ENCODE measurements at regions of chr12 and their contacts with region 1.

Region 1: DNA sequence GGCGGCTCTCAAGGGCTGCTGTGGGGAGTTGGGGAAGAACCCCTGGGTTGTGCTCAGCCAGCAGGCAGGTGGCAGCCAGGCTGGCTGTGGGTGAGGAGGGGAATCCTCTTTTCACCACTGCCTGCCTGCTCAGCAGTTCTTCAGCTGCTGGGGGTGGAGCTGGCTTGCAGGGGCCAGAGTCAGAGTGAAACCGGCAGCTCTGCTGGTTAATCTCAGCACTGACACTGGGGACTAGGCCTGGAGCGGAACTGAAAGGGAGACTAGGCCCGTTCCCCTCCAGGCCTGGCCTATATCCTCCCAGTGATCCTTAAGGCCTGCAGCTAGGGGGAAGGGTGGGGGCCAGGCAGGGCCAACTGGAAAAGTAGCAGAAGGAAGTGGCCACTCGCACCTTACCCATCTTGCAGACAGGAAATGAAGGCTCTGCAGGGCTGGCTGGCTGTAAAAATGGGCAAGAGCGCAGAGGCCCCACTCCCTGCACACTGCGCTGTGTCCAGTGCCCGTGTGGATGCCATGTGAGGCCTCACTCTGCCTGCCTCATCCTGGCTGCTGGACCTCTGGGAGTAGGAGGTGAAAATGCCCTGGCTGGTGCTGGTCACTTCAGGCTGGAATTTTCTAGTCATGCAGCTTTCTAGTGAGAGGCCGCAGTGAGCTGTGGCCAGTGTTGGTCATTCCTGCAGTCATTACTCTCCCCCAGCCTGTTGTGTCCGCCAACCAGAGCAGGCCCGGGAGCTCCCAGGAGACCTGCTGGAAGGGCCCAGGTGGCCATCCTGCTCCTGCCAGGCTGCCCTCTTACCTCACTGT is 39.4 kb downstream of the SH2B3 start:
- DNase-seq: peak; percentile 96
- ATAC-seq: peak; percentile 97
- H3K4me3 Mint-ChIP-seq: peak overlapping the region; percentile 26
- H3K27ac Mint-ChIP-seq: peak overlapping the region; percentile 83
- H3K4me1 Mint-ChIP-seq: peaks cover 78% of the 10 kb centered on the region
- H3K27me3 Mint-ChIP-seq: no peaks in the 10 kb centered on the region

Region 2: DNA sequence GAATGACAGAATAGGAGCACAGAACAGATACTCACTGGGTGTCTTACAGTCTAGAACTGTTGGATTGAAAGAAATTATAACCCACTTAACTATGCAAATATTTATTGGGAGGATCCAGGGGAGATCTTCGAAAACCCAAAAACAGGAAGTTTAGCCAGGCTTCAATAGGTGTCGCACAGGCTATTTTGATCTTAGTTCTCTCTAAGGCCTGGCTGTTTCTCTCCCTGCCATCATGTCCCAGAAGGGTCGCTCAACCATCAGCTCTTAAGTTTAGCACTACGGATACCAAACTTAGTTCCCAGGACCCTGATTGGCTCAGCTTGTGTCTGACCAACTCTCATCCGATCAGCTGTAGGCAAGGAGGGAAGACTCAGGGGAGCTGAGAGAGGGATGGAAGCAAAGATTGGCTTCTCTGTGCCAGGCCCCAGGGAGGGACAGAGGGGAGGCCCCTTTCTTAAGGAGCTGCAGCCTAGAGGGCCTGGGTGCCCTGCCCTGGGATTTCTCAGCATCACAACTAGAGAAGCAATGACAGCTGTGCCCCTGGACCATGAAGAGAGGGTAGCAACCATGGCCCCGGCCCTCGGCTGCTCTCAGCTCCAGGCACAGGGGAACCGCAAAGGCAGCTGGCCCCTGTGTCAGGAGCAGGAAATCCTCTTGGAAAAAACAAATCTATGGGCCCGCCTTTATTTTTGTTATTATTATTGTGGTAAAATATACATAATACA is 89.8 kb before region 1 on chr12:
- CTCF ChIA-PET with region 1: no interaction called
- DNase-seq: no peak
- ATAC-seq: no peak
- H3K4me3 Mint-ChIP-seq: no peak overlapping the region
- H3K27ac Mint-ChIP-seq: no peak overlapping the region
- H3K4me1 Mint-ChIP-seq: peaks cover 14% of the 10 kb centered on the region
- H3K27me3 Mint-ChIP-seq: peaks cover 8% of the 10 kb centered on the region

Region 3: DNA sequence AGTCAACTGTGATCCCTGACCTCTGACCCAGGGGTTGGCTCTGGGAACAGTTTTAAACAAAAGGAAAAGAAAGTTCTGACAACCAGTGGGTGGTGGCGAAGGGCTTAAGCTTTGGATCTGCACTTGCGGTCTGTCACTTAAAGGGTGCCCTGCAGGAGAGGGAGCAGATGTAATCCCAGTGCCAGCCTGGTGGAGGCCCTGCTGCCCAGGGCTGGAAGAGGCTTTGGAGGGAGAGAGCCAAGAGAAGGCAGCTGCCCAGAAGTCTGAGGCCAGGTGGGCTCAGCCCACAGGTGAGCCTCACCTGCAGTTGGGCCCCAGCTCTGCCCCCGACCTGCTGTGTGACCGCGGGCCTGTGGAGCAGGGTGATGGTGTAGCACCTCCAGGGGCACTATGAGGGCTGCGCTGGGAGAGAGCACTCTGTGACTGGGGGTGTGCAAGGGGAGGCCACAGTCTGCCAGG is 20.3 kb before region 1 on chr12:
- CTCF ChIA-PET with region 1: interaction called, 38 read pairs
- DNase-seq: no peak
- ATAC-seq: no peak
- H3K4me3 Mint-ChIP-seq: no peak overlapping the region
- H3K27ac Mint-ChIP-seq: peak overlapping the region; percentile 65
- H3K4me1 Mint-ChIP-seq: peaks cover 61% of the 10 kb centered on the region
- H3K27me3 Mint-ChIP-seq: no peaks in the 10 kb centered on the region

Region 4: DNA sequence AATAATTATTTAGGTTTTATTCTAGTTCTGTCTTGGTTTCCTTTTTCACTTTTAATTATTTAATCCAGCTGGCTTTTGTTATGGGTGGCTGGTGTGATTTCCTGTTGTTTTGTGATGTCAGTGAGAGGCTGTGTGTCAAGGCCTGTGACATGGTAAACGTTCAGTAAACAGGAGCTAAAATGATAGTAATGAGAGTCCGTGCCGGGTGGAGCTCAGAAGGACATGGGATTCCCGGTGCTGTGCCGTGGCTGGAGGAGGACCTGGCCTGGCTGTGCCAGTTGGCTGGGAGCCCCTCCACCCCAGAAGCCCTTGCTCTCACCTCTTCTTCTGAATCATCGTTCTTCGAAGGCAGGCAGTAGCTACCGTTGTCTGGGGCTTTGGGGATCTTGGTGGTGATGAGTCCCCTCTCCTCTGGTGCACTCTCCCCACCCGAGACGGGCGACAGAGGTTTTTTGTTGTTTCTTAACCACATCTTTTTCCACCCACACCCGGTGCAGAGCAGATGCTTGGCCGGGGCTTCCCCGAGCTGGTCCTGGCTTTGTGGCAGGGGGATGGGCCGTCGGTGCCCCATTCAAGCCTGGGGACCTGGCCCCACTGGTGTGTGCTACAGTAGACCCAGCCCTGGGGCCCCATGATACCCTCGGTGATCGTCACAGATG is 10.3 kb before region 1 on chr12:
- CTCF ChIA-PET with region 1: interaction called, 44 read pairs
- DNase-seq: peak; percentile 91
- ATAC-seq: peak; percentile 68
- H3K4me3 Mint-ChIP-seq: peak overlapping the region; percentile 63
- H3K27ac Mint-ChIP-seq: peak overlapping the region; percentile 95
- H3K4me1 Mint-ChIP-seq: peaks cover 89% of the 10 kb centered on the region
- H3K27me3 Mint-ChIP-seq: no peaks in the 10 kb centered on the region

Region 5: DNA sequence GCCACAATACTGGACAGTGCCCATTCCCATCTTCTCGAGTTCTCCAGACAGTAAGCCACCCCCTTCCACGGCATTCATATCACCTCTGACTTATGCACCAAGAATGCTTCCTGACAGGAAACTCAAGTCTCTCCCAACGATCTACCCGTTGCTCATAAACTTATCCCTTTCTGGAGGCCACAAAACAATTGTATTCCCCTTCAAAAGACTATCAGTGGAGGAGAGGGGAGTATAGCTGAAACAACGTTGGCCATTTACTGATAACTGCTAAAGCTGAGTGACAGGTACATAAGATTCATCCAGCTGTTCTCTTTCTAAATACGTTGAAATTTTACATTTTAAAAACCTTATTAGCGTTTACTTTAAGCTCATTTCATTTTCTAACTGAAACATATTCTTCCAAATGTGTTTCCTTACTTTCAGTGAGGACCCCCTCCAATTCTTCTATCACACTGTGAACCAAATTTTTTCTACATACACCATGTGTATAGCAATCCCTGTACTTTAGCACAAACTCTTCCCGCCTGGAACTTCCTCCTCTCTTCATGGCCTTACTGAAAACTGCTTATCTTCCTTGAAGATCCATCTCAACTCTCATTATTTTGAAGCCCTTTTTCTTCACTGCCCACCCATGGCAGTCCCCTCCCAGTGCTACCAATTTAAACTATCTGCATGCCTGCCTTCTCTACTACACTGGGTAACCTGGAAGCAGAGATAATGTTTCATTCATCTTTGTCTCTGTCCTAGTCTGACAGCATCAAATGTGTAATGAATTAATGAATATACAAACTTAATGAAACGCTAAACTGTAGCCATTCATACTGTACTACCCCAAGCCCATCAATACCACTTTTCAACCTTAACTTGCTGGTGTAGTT is 125.2 kb after region 1 on chr12:
- CTCF ChIA-PET with region 1: no interaction called
- DNase-seq: no peak
- ATAC-seq: no peak
- H3K4me3 Mint-ChIP-seq: no peak overlapping the region
- H3K27ac Mint-ChIP-seq: no peak overlapping the region
- H3K4me1 Mint-ChIP-seq: peaks cover 13% of the 10 kb centered on the region
- H3K27me3 Mint-ChIP-seq: no peaks in the 10 kb centered on the region

Measured in activated CD8-positive, alpha-beta memory T cell treated with anti-CD3 and anti-CD28 coated beads, Interleukin-2, amount 10 ng/mL, durations not matched to agents 7 days and 5 days (primary cell).